Natural killer cell (primary cell): ENCODE measurements at regions of chr7 and their contacts with region 1.

Region 1: DNA sequence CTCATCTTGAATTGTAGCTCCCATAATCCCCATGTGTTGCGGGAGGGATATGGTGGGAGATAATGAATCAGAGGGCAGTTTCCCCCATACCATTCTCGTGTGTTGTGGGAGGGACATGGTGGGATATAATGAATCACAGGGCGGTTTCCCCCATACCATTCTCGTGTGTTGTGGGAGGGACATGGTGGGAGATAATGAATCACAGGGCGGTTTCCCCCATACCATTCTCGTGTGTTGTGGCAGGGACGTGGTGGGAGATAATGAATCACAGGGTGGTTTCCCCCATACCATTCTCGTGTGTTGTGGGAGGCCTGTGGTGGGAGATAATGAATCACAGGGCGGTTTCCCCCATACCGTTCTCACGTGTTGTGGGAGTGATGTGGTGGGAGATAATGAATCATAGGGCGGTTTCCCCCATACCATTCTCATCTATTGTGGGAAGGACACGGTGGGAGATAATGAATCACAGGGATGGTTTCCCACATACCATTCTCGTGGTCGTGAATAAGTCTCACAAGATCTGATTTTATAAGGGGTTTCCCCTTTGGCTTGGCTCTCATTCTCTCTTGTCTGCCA is 271.0 kb downstream of the MAD1L1 start:
- DNase-seq: peak; percentile 67 to 81
- ATAC-seq: peak; percentile 66 to 87 (median 78)
- H3K4me3 ChIP-seq: no peak overlapping the region
- H3K4me3 Mint-ChIP-seq: peak overlapping the region; percentile 41
- H3K27ac ChIP-seq: peak overlapping the region; percentile 8
- H3K27ac Mint-ChIP-seq: peak overlapping the region; percentile 93 to 96
- H3K4me1 ChIP-seq: no peaks in the 10 kb centered on the region
- H3K4me1 Mint-ChIP-seq: peaks cover 34 to 36% of the 10 kb centered on the region in 2 donors
- H3K27me3 ChIP-seq: no peaks in the 10 kb centered on the region
- H3K27me3 Mint-ChIP-seq: peaks cover 24 to 26% of the 10 kb centered on the region in 2 donors
- CTCF ChIP-seq: no peak

Region 2: DNA sequence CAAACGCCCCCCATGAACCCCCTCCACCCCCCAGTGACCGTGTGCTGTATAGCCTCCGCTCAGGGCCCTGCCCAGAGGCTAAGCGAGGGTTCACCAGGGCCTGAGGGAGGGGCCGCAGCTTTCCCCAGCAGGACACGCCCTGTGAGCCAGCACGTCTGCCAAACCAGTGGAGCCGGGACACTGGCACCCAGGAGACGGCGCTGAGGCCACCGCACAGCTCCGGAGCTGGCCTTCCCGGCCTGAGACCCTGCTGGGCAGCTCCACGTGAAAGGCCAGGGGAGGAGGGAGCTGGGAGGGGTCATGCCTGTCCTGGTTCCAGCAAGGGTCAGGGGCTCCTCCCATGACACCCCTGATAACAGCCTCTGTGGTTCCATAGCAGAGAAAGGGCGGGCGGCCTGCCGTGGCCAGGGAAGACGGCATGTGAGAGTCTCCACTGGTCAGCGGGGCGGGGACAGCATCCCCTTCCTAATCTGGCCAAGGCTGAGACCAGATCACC is 13.4 kb before region 1 on chr7:
- intact Hi-C with region 1: no loop called
- DNase-seq: no peak
- ATAC-seq: no peak
- H3K4me3 ChIP-seq: no peak overlapping the region
- H3K4me3 Mint-ChIP-seq: no peak overlapping the region
- H3K27ac ChIP-seq: no peak overlapping the region
- H3K27ac Mint-ChIP-seq: no peak overlapping the region
- H3K4me1 ChIP-seq: peaks cover 47% of the 10 kb centered on the region
- H3K4me1 Mint-ChIP-seq: peaks cover 37 to 59% of the 10 kb centered on the region in 2 donors
- H3K27me3 ChIP-seq: no peaks in the 10 kb centered on the region
- H3K27me3 Mint-ChIP-seq: peaks cover 0 to 4% of the 10 kb centered on the region in 2 donors
- CTCF ChIP-seq: no peak

Region 3: GRCh38 chr7:1971946-1972654 is 10.3 kb after region 1 on chr7:
- intact Hi-C with region 1: loop called (anchors 1 kb)
- DNase-seq: peak in 1 of 2 donors; percentile 27
- ATAC-seq: peak; percentile 58 to 92 (median 75)
- H3K4me3 ChIP-seq: no peak overlapping the region
- H3K4me3 Mint-ChIP-seq: peak overlapping the region; percentile 64
- H3K27ac ChIP-seq: no peak overlapping the region
- H3K27ac Mint-ChIP-seq: peak overlapping the region; percentile 65 to 81
- H3K4me1 ChIP-seq: peaks cover 18% of the 10 kb centered on the region
- H3K4me1 Mint-ChIP-seq: peaks cover 39 to 50% of the 10 kb centered on the region in 2 donors
- H3K27me3 ChIP-seq: no peaks in the 10 kb centered on the region
- H3K27me3 Mint-ChIP-seq: peaks cover 38 to 44% of the 10 kb centered on the region in 2 donors
- CTCF ChIP-seq: no peak

Region 4: DNA sequence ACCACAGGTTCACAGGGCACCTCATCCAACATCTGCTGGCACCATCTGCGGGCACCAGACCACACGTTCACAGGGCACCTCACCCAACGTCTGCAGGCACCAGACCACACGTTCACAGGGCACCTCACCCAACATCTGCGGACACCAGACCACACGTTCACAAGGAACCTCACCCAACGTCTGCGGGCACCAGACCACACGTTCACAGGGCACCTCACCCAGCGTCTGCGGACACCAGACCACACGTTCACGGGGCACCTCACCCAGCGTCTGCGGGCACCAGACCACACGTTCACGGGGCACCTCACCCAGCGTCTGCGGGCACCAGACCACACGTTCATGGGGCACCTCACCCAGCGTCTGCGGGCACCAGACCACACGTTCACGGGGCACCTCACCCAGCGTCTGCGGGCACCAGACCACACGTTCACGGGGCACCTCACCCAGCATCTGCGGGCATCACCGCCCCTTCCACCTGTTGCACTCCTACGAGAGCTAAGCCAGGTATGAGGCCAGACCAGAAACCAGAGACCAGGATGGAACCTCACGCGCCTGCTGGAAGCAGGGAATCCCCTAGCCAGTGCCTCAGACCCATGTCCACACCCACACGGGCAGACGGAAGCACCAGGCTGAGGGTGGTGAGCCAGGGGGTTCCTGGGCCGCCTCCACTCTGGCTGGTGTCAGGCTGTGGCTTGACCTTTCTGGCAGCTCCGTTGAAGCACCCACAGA is 88.2 kb after region 1 on chr7:
- intact Hi-C with region 1: loop called (anchors 1 kb)
- DNase-seq: peak; percentile 51 to 53
- ATAC-seq: peak; percentile 74 to 93 (median 81)
- H3K4me3 ChIP-seq: no peak overlapping the region
- H3K4me3 Mint-ChIP-seq: peak overlapping the region; percentile 64
- H3K27ac ChIP-seq: peak overlapping the region; percentile 36
- H3K27ac Mint-ChIP-seq: peak overlapping the region; percentile 68 to 90
- H3K4me1 ChIP-seq: peaks cover 44% of the 10 kb centered on the region
- H3K4me1 Mint-ChIP-seq: peaks cover 50 to 53% of the 10 kb centered on the region in 2 donors
- H3K27me3 ChIP-seq: no peaks in the 10 kb centered on the region
- H3K27me3 Mint-ChIP-seq: peaks cover 10 to 13% of the 10 kb centered on the region in 2 donors
- CTCF ChIP-seq: no peak

Region 5: GRCh38 chr7:2104107-2104710 is 142.4 kb after region 1 on chr7:
- intact Hi-C with region 1: loop called (anchors 5 kb)
- DNase-seq: peak; percentile 42 to 84
- ATAC-seq: peak; percentile 58 to 63 (median 61)
- H3K4me3 ChIP-seq: no peak overlapping the region
- H3K4me3 Mint-ChIP-seq: no peak overlapping the region
- H3K27ac ChIP-seq: no peak overlapping the region
- H3K27ac Mint-ChIP-seq: peak overlapping the region in 1 of 2 donors; percentile 21
- H3K4me1 ChIP-seq: peaks cover 57% of the 10 kb centered on the region
- H3K4me1 Mint-ChIP-seq: peaks cover 55 to 56% of the 10 kb centered on the region in 2 donors
- H3K27me3 ChIP-seq: no peaks in the 10 kb centered on the region
- H3K27me3 Mint-ChIP-seq: peaks cover 0 to 5% of the 10 kb centered on the region in 2 donors
- CTCF ChIP-seq: peak; percentile 46

Region 6: DNA sequence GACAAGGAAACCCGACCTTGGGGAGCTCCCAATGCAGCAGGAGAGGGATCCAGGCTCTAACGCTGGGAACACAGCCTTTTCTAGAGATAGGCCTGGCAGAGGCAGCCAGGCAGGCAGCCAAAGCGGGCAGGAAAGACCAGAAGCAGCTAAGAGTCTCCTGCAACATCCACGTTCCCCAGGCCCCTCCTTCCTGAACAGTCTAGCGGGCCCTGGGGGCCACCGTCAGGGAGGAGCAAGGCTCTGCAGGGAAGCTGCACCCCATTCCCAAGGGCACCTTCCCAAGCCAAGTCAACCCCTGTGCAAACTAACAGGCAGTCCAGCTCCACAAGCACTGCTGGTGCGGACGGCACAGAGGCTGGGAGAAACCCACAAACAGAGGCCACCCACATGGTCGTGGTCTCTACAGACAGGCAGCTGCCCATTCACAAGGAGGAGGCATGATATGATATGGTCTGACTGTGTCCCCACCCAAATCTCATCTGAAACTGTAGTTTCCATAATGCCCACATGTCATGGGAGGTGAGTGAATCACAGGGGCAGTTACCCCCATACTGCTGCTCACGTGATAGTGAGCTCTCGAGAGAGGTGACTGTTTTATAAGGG is 155.3 kb after region 1 on chr7:
- intact Hi-C with region 1: no loop called
- DNase-seq: no peak
- ATAC-seq: no peak
- H3K4me3 ChIP-seq: no peak overlapping the region
- H3K4me3 Mint-ChIP-seq: no peak overlapping the region
- H3K27ac ChIP-seq: no peak overlapping the region
- H3K27ac Mint-ChIP-seq: no peak overlapping the region
- H3K4me1 ChIP-seq: peaks cover 45% of the 10 kb centered on the region
- H3K4me1 Mint-ChIP-seq: peaks cover 40 to 59% of the 10 kb centered on the region in 2 donors
- H3K27me3 ChIP-seq: no peaks in the 10 kb centered on the region
- H3K27me3 Mint-ChIP-seq: peaks cover 6 to 24% of the 10 kb centered on the region in 2 donors
- CTCF ChIP-seq: no peak